ENCODE measurements at regions of chr6 and their contacts with region 1.

Region 1: GRCh38 chr6:161370880-161371279 is 97.0 kb upstream of the AGPAT4 start:
- DNase-seq: peak; percentile 62
- H3K4me3 ChIP-seq: no peak overlapping the region
- H3K27ac ChIP-seq: no peak overlapping the region
- H3K4me1 ChIP-seq: no peaks in the 10 kb centered on the region
- H3K27me3 ChIP-seq: no peaks in the 10 kb centered on the region
- CTCF ChIP-seq: peak; percentile 89 to 91
- POLR2A ChIP-seq: no peak

Region 2: GRCh38 chr6:159862103-159862502 is 1508.8 kb before region 1 on chr6:
- CTCF ChIA-PET with region 1: interaction called, 16 read pairs
- POLR2A ChIA-PET with region 1: no interaction called
- dilution Hi-C with region 1: no loop called
- intact Hi-C with region 1: no loop called
- DNase-seq: no peak
- H3K4me3 ChIP-seq: no peak overlapping the region
- H3K27ac ChIP-seq: no peak overlapping the region
- H3K4me1 ChIP-seq: no peaks in the 10 kb centered on the region
- H3K27me3 ChIP-seq: no peaks in the 10 kb centered on the region
- CTCF ChIP-seq: no peak
- POLR2A ChIP-seq: no peak

Region 3: DNA sequence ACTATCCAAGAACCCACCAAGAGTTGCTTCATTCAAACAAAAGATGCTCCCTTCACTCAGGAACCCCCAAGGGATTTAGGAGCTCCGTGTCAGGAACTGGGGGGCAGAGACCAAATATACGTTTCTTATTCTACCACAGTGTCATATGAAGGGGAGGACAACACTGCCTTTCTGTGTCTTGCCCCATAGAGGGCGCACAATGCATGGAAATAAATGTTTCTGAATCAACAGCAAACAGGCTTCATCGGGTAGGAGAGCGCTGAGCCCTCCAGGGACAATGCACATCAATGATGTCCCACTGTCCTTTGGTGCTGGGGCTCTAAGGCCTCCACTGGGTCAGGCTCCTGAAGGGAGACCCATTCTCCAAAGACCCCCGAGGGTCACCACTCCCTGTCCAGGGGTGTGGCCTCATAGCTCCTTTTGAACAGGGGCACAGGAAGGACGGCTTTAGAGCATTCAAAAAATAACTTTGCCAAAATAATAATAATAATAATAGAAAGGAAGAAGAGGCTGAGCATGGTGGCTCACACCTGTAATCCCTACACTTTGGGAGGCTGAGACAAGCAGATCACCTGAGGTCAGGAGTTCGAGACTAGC is 637.7 kb before region 1 on chr6:
- CTCF ChIA-PET with region 1: interaction called, 17 read pairs
- POLR2A ChIA-PET with region 1: no interaction called
- dilution Hi-C with region 1: no loop called
- intact Hi-C with region 1: loop called (anchors 2 kb)
- DNase-seq: no peak
- H3K4me3 ChIP-seq: no peak overlapping the region
- H3K27ac ChIP-seq: no peak overlapping the region
- H3K4me1 ChIP-seq: no peaks in the 10 kb centered on the region
- H3K27me3 ChIP-seq: no peaks in the 10 kb centered on the region
- CTCF ChIP-seq: peak; percentile 22 to 38
- POLR2A ChIP-seq: no peak

Region 4: DNA sequence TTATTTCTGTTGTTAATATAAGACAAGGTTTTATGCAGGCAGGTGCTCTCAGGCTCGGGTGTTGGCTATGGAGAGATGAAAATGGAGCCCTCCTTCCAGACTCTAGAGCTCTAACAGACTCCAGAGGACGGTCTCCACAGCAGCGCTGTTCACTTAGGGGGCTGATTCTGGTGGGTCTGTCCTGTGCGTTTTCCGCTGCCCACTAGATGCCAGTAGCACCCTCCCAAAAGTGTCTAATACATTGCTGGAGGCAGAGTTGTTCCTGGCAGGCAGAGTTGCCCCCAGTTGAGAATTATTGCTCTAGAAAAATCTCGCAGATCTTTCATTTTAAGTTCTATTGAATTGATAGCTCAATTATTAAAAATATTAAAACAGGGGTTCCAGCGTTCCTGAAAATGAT is 269.4 kb before region 1 on chr6:
- CTCF ChIA-PET with region 1: interaction called, 41 read pairs
- POLR2A ChIA-PET with region 1: no interaction called
- dilution Hi-C with region 1: no loop called
- intact Hi-C with region 1: loop called (anchors 1 kb)
- DNase-seq: no peak
- H3K4me3 ChIP-seq: no peak overlapping the region
- H3K27ac ChIP-seq: no peak overlapping the region
- H3K4me1 ChIP-seq: no peaks in the 10 kb centered on the region
- H3K27me3 ChIP-seq: no peaks in the 10 kb centered on the region
- CTCF ChIP-seq: peak; percentile 8 to 26
- POLR2A ChIP-seq: no peak

Region 5: DNA sequence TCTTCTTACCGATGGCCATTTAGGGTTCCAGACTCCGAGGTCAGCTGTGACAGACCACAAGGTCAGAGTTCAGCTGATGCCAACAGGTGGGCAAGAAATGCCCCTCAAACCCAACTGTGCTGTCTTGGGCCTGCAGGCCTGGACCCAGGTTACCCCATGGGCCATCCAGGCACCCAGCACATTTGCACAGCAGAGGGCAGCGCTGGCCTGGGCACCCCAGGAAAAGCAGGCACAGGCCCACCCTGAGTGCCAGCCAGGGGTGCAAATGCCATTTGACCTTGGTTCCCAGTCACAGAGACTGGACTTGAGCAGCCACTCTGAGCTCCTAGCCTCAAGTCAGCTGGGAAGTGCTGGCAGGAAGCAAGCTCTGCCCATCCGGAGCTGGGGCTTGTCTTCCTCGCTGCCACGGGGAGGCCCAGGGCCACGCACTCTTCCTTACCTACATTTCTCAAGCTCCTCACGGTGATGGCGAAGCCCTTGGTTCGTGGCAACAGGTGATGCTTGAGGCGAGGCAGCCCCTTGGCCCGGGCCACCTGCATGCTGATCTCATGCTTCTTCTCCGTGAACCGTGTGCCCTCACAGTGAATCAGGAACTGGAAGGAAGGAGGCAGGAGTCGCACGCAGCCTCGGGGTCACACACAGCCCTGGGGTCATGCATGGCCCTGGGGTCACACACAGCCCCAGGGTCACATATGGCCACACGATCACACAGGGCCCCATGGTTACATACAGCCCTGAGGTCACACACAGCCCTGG is 217.8 kb before region 1 on chr6:
- CTCF ChIA-PET with region 1: interaction called, 142 read pairs
- POLR2A ChIA-PET with region 1: no interaction called
- dilution Hi-C with region 1: no loop called
- intact Hi-C with region 1: loop called (anchors 1 kb)
- DNase-seq: no peak
- H3K4me3 ChIP-seq: no peak overlapping the region
- H3K27ac ChIP-seq: no peak overlapping the region
- H3K4me1 ChIP-seq: no peaks in the 10 kb centered on the region
- H3K27me3 ChIP-seq: no peaks in the 10 kb centered on the region
- CTCF ChIP-seq: peak; percentile 15 to 54
- POLR2A ChIP-seq: no peak

Region 6: GRCh38 chr6:161354276-161354840 is 16.5 kb before region 1 on chr6:
- CTCF ChIA-PET with region 1: interaction called, 23 read pairs
- POLR2A ChIA-PET with region 1: no interaction called
- dilution Hi-C with region 1: no loop called
- intact Hi-C with region 1: no loop called
- DNase-seq: no peak
- H3K4me3 ChIP-seq: no peak overlapping the region
- H3K27ac ChIP-seq: no peak overlapping the region
- H3K4me1 ChIP-seq: no peaks in the 10 kb centered on the region
- H3K27me3 ChIP-seq: no peaks in the 10 kb centered on the region
- CTCF ChIP-seq: no peak
- POLR2A ChIP-seq: no peak

Measured in endothelial cell of umbilical vein (primary cell).